ENCODE measurements at regions of chr21 and their contacts with region 1.

Region 1: DNA sequence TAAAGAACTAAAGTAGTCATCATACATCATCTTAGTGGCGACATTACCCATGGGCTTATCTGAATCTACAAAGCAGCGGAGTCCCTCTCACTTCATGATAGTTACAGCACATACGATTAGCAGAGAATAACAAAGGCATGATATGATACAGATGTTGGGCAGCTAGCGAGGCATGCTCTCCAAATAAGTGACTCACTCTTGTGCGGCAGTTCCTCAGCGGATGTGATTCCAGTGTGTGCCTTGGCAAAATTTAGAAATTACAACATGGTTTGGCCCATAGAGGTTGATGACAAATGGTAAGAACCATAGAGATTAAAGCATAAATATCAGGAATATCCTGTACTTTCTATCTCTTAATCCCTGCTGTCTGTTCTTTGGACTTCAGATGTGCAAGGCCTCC is 48.1 kb upstream of the PAXBP1 start:
- DNase-seq: no peak
- ATAC-seq: no peak
- H3K4me3 ChIP-seq: no peak overlapping the region
- H3K4me3 Mint-ChIP-seq: no peak overlapping the region
- H3K27ac ChIP-seq: no peak overlapping the region
- H3K27ac Mint-ChIP-seq: no peak overlapping the region
- H3K4me1 ChIP-seq: no peaks in the 10 kb centered on the region
- H3K4me1 Mint-ChIP-seq: no peaks in the 10 kb centered on the region
- H3K27me3 ChIP-seq: no peaks in the 10 kb centered on the region
- H3K27me3 Mint-ChIP-seq: peaks cover 0 to 8% of the 10 kb centered on the region in 2 donors
- CTCF ChIP-seq: no peak

Region 2: GRCh38 chr21:32782698-32783097 is 37.0 kb before region 1 on chr21:
- intact Hi-C with region 1: no loop called
- DNase-seq: no peak
- ATAC-seq: no peak
- H3K4me3 ChIP-seq: no peak overlapping the region
- H3K4me3 Mint-ChIP-seq: no peak overlapping the region
- H3K27ac ChIP-seq: no peak overlapping the region
- H3K27ac Mint-ChIP-seq: no peak overlapping the region
- H3K4me1 ChIP-seq: no peaks in the 10 kb centered on the region
- H3K4me1 Mint-ChIP-seq: no peaks in the 10 kb centered on the region
- H3K27me3 ChIP-seq: no peaks in the 10 kb centered on the region
- H3K27me3 Mint-ChIP-seq: no peaks in the 10 kb centered on the region
- CTCF ChIP-seq: no peak

Region 3: GRCh38 chr21:33189824-33190223 is 370.1 kb after region 1 on chr21:
- intact Hi-C with region 1: loop called (anchors 5 kb)
- DNase-seq: no peak
- ATAC-seq: no peak
- H3K4me3 ChIP-seq: no peak overlapping the region
- H3K4me3 Mint-ChIP-seq: no peak overlapping the region
- H3K27ac ChIP-seq: no peak overlapping the region
- H3K27ac Mint-ChIP-seq: no peak overlapping the region
- H3K4me1 ChIP-seq: peaks cover 19% of the 10 kb centered on the region
- H3K4me1 Mint-ChIP-seq: peaks cover 19 to 20% of the 10 kb centered on the region in 2 donors
- H3K27me3 ChIP-seq: no peaks in the 10 kb centered on the region
- H3K27me3 Mint-ChIP-seq: peaks cover 7 to 11% of the 10 kb centered on the region in 2 donors
- CTCF ChIP-seq: no peak

Region 4: DNA sequence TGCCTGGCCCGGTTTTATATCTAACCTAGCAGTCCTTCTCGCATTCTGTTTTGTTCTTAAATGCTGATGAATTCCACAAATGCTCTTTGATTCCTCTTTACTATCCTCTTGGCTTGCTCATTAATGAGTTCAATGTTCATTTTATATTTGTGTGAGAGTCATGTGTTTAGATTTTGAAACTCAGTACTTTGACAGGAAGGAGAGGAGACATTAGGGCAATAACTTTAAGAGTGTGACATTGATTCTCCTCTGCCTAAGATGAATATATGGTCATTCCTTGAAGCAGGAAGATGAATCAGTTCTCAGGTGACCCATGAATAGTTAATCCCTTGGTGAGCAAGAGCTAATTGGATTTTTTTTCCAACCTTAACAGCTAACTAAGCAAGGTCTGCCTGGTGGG is 1337.8 kb after region 1 on chr21:
- intact Hi-C with region 1: no loop called
- DNase-seq: no peak
- ATAC-seq: no peak
- H3K4me3 ChIP-seq: no peak overlapping the region
- H3K4me3 Mint-ChIP-seq: no peak overlapping the region
- H3K27ac ChIP-seq: no peak overlapping the region
- H3K27ac Mint-ChIP-seq: peak overlapping the region in 1 of 2 donors; percentile 40
- H3K4me1 ChIP-seq: no peaks in the 10 kb centered on the region
- H3K4me1 Mint-ChIP-seq: peaks cover 17 to 18% of the 10 kb centered on the region in 2 donors
- H3K27me3 ChIP-seq: no peaks in the 10 kb centered on the region
- H3K27me3 Mint-ChIP-seq: no peaks in the 10 kb centered on the region
- CTCF ChIP-seq: no peak

Measured in natural killer cell (primary cell).